Mammary epithelial cell (primary cell): ENCODE measurements at regions of chr4 and their contacts with region 1.

Region 1: GRCh38 chr4:139042981-139043460 is 27.4 kb downstream of the NOCT start:
- DNase-seq: no peak
- H3K4me3 ChIP-seq: no peak overlapping the region
- H3K27ac ChIP-seq: no peak overlapping the region
- H3K4me1 ChIP-seq: no peaks in the 10 kb centered on the region
- H3K27me3 ChIP-seq: no peaks in the 10 kb centered on the region
- CTCF ChIP-seq: no peak

Region 2: GRCh38 chr4:139509727-139510410 is 466.8 kb after region 1 on chr4:
- CTCF ChIA-PET with region 1: interaction called, 23 read pairs
- dilution Hi-C with region 1: no loop called
- in situ Hi-C with region 1: no loop called
- intact Hi-C with region 1: no loop called
- DNase-seq: no peak
- H3K4me3 ChIP-seq: no peak overlapping the region
- H3K27ac ChIP-seq: no peak overlapping the region
- H3K4me1 ChIP-seq: no peaks in the 10 kb centered on the region
- H3K27me3 ChIP-seq: no peaks in the 10 kb centered on the region
- CTCF ChIP-seq: peak; percentile 7 to 57